H1 (cell line): ENCODE measurements at regions of chr1 and their contacts with region 1.

Region 1: DNA sequence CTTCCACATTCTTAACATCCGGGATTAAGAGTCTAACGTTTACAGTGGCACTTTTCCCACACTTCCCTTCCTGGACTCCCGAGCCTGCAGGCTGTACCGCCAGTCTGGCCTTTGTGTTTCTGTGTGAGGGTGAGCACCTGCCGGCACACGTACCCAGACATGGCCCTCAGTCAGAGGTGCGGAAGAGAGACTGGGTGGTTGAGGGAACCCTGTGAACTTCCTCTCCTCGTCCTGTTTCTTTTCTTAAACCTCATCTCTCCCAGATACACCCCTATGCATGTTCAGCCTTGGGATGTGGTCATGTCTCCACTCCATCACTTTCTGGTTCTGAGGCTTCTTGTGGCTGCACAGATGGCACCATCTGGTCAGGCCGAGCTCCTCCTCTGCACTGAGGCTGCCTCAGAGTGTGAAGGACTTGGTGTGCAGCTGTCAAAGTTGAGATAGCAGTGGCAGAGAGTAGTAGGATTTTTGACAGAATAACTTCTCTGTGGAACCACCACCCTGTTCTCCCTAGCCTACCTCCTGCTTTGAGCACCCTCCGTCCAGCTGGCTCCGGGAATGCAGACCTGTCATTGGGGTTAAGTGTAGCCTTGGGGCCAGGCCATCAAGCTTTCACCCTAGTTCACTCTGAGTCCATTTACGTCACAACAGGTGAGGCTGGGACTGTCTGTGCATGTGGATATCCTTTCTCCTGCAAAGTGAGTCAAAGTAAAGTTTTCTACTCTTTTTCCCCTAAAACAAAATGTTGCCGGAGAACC is 31.4 kb downstream of the VASH2 start:
- DNase-seq: peak in 1 of 2 experiments; percentile 43
- H3K4me3 ChIP-seq: no peak overlapping the region
- H3K27ac ChIP-seq: no peak overlapping the region
- H3K4me1 ChIP-seq: peaks cover 0 to 8% (median 4%) of the 10 kb centered on the region in 4 experiments
- H3K27me3 ChIP-seq: no peaks in the 10 kb centered on the region
- CTCF ChIP-seq: no peak
- EP300 ChIP-seq: no peak
- POLR2A ChIP-seq: peak; percentile 61 to 71
- RAD21 ChIP-seq: no peak

Region 2: DNA sequence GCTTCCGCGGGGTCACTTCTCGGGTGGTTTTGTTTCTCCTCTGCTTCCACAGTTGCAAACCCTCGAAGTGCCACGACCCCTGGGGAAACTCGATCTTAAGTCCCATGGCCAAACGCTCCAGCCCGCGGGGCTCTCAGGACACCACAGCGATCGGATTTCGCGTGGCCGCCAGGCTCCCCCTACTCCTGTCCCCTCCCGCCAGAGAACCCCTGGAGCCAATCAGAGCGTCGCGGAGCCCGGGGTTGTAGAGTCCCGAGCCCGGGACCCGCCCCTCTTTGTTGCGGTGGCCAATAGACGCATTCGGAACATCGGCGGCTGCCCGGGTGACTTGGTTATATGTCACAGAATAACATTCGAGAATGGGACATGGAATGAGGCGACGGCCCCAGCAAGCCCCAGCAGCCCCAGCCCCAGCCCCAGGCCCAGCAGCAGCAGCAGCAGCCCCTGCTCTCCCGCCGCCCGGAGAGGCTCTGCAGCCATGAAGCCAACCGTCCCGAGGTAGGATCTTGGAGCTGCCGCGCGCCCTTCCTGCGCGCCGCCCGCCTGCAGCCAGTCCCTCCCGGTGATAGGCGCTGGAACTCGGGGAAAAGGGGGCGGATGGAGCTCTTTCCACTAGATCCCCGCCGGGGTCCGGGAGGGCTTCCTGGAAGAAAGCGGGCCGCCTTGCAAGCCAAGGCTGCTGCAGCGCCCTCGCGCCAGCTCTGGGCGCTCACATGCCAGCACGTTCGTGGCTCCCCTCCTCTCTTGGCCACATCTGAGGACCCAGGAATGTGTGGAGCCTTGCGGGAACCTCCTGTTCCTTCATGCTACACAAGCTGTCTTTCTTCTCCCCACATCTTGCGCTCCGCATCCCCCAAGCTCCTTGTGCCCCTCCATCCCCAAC is 31.3 kb before region 1 on chr1 and contains the start of gene VASH2:
- CTCF ChIA-PET with region 1: interaction called, 5 read pairs
- POLR2A ChIA-PET with region 1: interaction called, 76 read pairs
- DNase-seq: peak; percentile 47 to 89
- H3K4me3 ChIP-seq: peak within 1 kb of the TSS; percentile 55 to 95 (median 94)
- H3K27ac ChIP-seq: no peak within 1 kb of the TSS
- H3K4me1 ChIP-seq: peaks cover 3 to 15% (median 11%) of the 10 kb centered on the region in 4 experiments
- H3K27me3 ChIP-seq: peaks cover 0 to 4% (median 0%) of the 10 kb centered on the region in 4 experiments; a peak in 1 of 7 replicates
- CTCF ChIP-seq: no peak
- EP300 ChIP-seq: no peak
- POLR2A ChIP-seq: peak in 1 of 2 experiments; percentile 31; a peak in 1 of 3 replicates
- RAD21 ChIP-seq: no peak
- total RNA-seq, gene VASH2: 184 and 187 TPM in 2 replicates

Region 3: GRCh38 chr1:213054733-213055591 is 73.2 kb after region 1 on chr1:
- CTCF ChIA-PET with region 1: no interaction called
- POLR2A ChIA-PET with region 1: no interaction called
- DNase-seq: no peak
- H3K4me3 ChIP-seq: no peak overlapping the region
- H3K27ac ChIP-seq: no peak overlapping the region
- H3K4me1 ChIP-seq: peaks cover 0 to 9% (median 2%) of the 10 kb centered on the region in 4 experiments; a peak in 2 of 7 replicates
- H3K27me3 ChIP-seq: no peaks in the 10 kb centered on the region; a peak in 1 of 7 replicates
- CTCF ChIP-seq: no peak
- EP300 ChIP-seq: no peak
- POLR2A ChIP-seq: no peak
- RAD21 ChIP-seq: no peak

Region 4: DNA sequence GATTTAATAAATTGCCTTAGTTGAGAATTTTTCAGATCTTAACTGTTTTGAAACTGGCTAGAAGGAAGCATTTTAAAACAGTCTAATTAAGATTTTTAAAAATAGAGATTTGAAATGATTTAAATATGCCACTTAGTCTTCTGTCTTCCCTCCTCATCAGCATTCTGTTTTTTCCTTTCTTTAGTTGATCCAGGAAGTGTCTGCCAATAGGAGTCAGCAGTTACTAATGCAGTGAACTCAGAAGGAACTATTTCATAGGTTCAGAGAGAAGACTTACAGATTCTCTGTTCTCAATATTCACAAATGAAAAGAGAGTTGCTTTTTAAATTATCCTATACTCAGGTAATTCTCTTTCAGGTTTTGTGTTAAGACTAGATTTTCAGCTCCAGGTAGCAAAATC is 153.8 kb after region 1 on chr1:
- CTCF ChIA-PET with region 1: no interaction called
- POLR2A ChIA-PET with region 1: no interaction called
- DNase-seq: no peak
- H3K4me3 ChIP-seq: no peak overlapping the region
- H3K27ac ChIP-seq: no peak overlapping the region
- H3K4me1 ChIP-seq: no peaks in the 10 kb centered on the region
- H3K27me3 ChIP-seq: no peaks in the 10 kb centered on the region
- CTCF ChIP-seq: no peak
- EP300 ChIP-seq: no peak
- POLR2A ChIP-seq: no peak
- RAD21 ChIP-seq: peak in 1 of 2 experiments; percentile 23; a peak in 1 of 4 replicates